B cell (primary cell): ENCODE measurements at regions of chr4 and their contacts with region 1.

Region 1: DNA sequence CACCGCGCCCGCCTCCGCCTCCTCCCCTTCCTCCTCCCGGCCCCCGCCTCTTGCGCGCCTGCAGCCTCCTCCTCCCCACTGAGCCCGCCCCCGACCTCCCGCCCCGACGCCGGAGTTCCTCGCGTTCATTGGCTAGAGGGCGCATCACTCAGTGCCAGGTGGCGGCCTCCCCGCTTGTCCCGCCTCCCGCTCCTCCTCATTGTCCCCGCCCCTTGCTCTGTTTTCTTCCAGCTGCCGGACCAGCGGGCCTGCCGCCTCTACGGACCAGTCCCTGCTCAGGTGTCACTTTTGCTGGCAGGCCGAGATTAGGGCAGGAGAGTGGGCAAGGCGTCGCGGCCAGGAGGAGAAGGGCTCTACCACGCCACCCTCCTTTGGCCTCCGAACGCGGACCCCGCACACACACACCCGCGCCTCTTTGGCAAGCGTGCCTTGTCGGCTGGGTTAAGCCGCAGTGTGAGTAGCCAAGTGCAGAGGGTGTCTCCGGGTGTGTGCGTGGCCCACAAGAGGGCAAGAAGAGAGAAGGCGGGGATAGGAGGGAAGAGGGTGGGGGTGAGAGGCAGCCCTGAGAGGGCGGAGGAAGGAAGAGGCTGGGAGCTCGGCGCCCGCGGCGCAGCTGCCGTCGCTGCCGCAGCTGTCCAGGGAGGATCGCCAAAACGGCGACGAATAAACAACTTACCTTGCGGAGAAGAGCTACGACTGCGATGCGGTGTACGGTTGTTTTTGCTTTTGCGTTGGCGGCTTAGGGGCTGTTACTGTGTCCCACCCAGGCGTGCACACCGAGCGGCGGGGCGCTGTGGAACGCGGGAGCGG is 436 bp upstream of the PPP3CA start:
- DNase-seq: peak; percentile 98
- ATAC-seq: peak; percentile 80
- H3K4me3 ChIP-seq: peak overlapping the region; percentile 77 to 96 (median 95)
- H3K4me3 Mint-ChIP-seq: peak overlapping the region; percentile 99
- H3K27ac ChIP-seq: peak overlapping the region; percentile 85 to 87
- H3K27ac Mint-ChIP-seq: peak overlapping the region; percentile 95
- H3K4me1 ChIP-seq: peaks cover 22 to 36% of the 10 kb centered on the region in 2 donors
- H3K4me1 Mint-ChIP-seq: peaks cover 42% of the 10 kb centered on the region
- H3K27me3 ChIP-seq: no peaks in the 10 kb centered on the region
- H3K27me3 Mint-ChIP-seq: no peaks in the 10 kb centered on the region
- CTCF ChIP-seq: no peak

Region 2: GRCh38 chr4:100093091-100093866 is 1254.5 kb before region 1 on chr4:
- CTCF ChIA-PET with region 1: interaction called, 3 read pairs
- POLR2A ChIA-PET with region 1: no interaction called
- intact Hi-C with region 1: loop called (anchors 10 kb)
- DNase-seq: peak; percentile 93
- ATAC-seq: peak; percentile 99
- H3K4me3 ChIP-seq: no peak overlapping the region
- H3K4me3 Mint-ChIP-seq: peak overlapping the region; percentile 48
- H3K27ac ChIP-seq: no peak overlapping the region
- H3K27ac Mint-ChIP-seq: peak overlapping the region; percentile 57
- H3K4me1 ChIP-seq: peaks cover 7 to 12% of the 10 kb centered on the region in 2 donors
- H3K4me1 Mint-ChIP-seq: peaks cover 26% of the 10 kb centered on the region
- H3K27me3 ChIP-seq: no peaks in the 10 kb centered on the region
- H3K27me3 Mint-ChIP-seq: peaks cover 5% of the 10 kb centered on the region
- CTCF ChIP-seq: peak; percentile 84

Region 3: DNA sequence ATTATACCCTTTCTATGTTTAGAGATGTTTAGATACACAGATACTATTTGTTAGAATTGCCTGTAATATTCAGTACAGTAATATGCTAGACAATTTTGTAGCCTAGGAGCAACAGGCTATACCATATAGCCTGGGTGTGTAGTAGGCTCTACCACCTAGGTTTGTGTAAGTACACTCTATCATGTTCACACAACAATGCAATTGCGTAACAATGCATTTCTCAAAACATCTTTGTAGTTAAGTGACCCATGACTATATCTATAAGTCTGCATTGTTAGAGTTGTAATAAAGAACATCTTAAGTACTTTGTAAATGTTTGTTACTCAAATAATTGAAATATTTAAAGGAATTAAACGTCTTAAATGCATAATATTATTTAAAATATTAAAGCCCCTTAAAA is 379.7 kb before region 1 on chr4:
- CTCF ChIA-PET with region 1: no interaction called
- POLR2A ChIA-PET with region 1: no interaction called
- intact Hi-C with region 1: no loop called
- DNase-seq: no peak
- ATAC-seq: no peak
- H3K4me3 ChIP-seq: no peak overlapping the region
- H3K4me3 Mint-ChIP-seq: no peak overlapping the region
- H3K27ac ChIP-seq: no peak overlapping the region
- H3K27ac Mint-ChIP-seq: no peak overlapping the region
- H3K4me1 ChIP-seq: no peaks in the 10 kb centered on the region
- H3K4me1 Mint-ChIP-seq: no peaks in the 10 kb centered on the region
- H3K27me3 ChIP-seq: no peaks in the 10 kb centered on the region
- H3K27me3 Mint-ChIP-seq: peaks cover 9% of the 10 kb centered on the region
- CTCF ChIP-seq: no peak

Region 4: GRCh38 chr4:101187841-101188240 is 159.9 kb before region 1 on chr4:
- CTCF ChIA-PET with region 1: interaction called, 3 read pairs
- POLR2A ChIA-PET with region 1: interaction called, 7 read pairs
- intact Hi-C with region 1: loop called (anchors 5 kb)
- DNase-seq: peak; percentile 23
- ATAC-seq: no peak
- H3K4me3 ChIP-seq: no peak overlapping the region
- H3K4me3 Mint-ChIP-seq: no peak overlapping the region
- H3K27ac ChIP-seq: no peak overlapping the region
- H3K27ac Mint-ChIP-seq: no peak overlapping the region
- H3K4me1 ChIP-seq: peaks cover 20 to 33% of the 10 kb centered on the region in 2 donors
- H3K4me1 Mint-ChIP-seq: peaks cover 56% of the 10 kb centered on the region
- H3K27me3 ChIP-seq: no peaks in the 10 kb centered on the region
- H3K27me3 Mint-ChIP-seq: no peaks in the 10 kb centered on the region
- CTCF ChIP-seq: peak; percentile 43

Region 5: DNA sequence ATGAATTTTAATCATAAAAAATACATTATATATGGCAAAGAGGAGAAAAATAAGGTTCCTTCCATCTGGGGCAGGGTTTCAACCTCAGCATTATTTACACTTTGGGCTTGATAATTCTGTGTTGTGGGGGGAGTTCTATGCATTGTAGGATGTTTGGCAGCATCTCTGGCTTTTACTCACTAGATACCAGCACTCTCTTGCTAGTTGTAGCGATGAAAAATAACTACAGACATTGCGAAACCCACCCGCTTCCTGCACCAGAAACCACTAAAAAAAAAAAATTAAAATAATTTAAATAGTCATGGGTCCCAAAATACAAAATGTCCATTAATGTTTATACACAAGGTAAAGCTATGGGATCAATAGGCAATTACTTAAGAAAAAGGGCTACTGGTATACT is 53.2 kb before region 1 on chr4:
- CTCF ChIA-PET with region 1: no interaction called
- POLR2A ChIA-PET with region 1: no interaction called
- intact Hi-C with region 1: no loop called
- DNase-seq: no peak
- ATAC-seq: no peak
- H3K4me3 ChIP-seq: no peak overlapping the region
- H3K4me3 Mint-ChIP-seq: no peak overlapping the region
- H3K27ac ChIP-seq: no peak overlapping the region
- H3K27ac Mint-ChIP-seq: no peak overlapping the region
- H3K4me1 ChIP-seq: peaks cover 11 to 21% of the 10 kb centered on the region in 2 donors
- H3K4me1 Mint-ChIP-seq: peaks cover 64% of the 10 kb centered on the region
- H3K27me3 ChIP-seq: no peaks in the 10 kb centered on the region
- H3K27me3 Mint-ChIP-seq: no peaks in the 10 kb centered on the region
- CTCF ChIP-seq: no peak

Region 6: GRCh38 chr4:101699441-101700124 is 351.8 kb after region 1 on chr4:
- CTCF ChIA-PET with region 1: interaction called, 3 read pairs
- POLR2A ChIA-PET with region 1: interaction called, 12 read pairs
- intact Hi-C with region 1: loop called (anchors 2 kb)
- DNase-seq: peak; percentile 72
- ATAC-seq: peak; percentile 84
- H3K4me3 ChIP-seq: peak overlapping the region; percentile 27 to 55 (median 48)
- H3K4me3 Mint-ChIP-seq: peak overlapping the region; percentile 81
- H3K27ac ChIP-seq: peak overlapping the region; percentile 79 to 86
- H3K27ac Mint-ChIP-seq: peak overlapping the region; percentile 94
- H3K4me1 ChIP-seq: peaks cover 31 to 41% of the 10 kb centered on the region in 2 donors
- H3K4me1 Mint-ChIP-seq: peaks cover 49% of the 10 kb centered on the region
- H3K27me3 ChIP-seq: no peaks in the 10 kb centered on the region
- H3K27me3 Mint-ChIP-seq: no peaks in the 10 kb centered on the region
- CTCF ChIP-seq: no peak

Region 7: DNA sequence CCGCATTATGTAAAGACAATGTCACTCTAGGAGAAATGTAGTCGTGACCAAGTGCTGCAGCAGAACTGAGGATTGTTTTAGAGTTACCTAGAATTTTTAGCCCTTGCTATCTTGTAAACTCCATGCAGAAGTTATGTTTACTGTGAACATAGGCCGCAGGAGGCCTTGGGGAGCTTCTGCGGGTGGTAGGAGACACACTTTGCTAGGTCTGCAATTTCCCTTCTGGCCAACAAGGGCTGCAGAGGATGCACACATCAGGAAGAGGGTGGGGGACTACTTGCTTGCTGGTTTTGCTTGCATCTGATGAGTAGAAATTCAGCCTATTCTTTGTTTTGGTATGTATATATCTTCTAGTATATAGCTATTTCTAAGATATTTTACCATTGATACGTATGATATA is 465.8 kb after region 1 on chr4:
- CTCF ChIA-PET with region 1: no interaction called
- POLR2A ChIA-PET with region 1: interaction called, 11 read pairs
- intact Hi-C with region 1: loop called (anchors 2 kb)
- DNase-seq: peak; percentile 84
- ATAC-seq: peak; percentile 99
- H3K4me3 ChIP-seq: peak overlapping the region; percentile 39 to 88 (median 60)
- H3K4me3 Mint-ChIP-seq: peak overlapping the region; percentile 93
- H3K27ac ChIP-seq: peak overlapping the region; percentile 82 to 94
- H3K27ac Mint-ChIP-seq: peak overlapping the region; percentile 94
- H3K4me1 ChIP-seq: peaks cover 58 to 78% of the 10 kb centered on the region in 2 donors
- H3K4me1 Mint-ChIP-seq: peaks cover 75% of the 10 kb centered on the region
- H3K27me3 ChIP-seq: no peaks in the 10 kb centered on the region
- H3K27me3 Mint-ChIP-seq: no peaks in the 10 kb centered on the region
- CTCF ChIP-seq: no peak